ENCODE measurements at regions of chr3 and their contacts with region 1.

Region 1: GRCh38 chr3:168165390-168166269 is 69.9 kb upstream of the GOLIM4 start:
- DNase-seq: peak in 3 of 5 donors; percentile 41 to 66 (median 56)
- ATAC-seq: peak; percentile 48 to 83 (median 72)
- H3K4me3 ChIP-seq: peak overlapping the region in 5 of 12 donors; percentile 11 to 26 (median 23)
- H3K27ac ChIP-seq: peak overlapping the region in 2 of 12 donors; percentile 28 to 46
- H3K4me1 ChIP-seq: peaks cover 0 to 4% (median 0%) of the 10 kb centered on the region in 12 donors
- H3K27me3 ChIP-seq: no peaks in the 10 kb centered on the region
- CTCF ChIP-seq: peak; percentile 59 to 88 (median 80)
- POLR2A ChIP-seq: no peak

Region 2: GRCh38 chr3:167837466-167837865 is 328.2 kb before region 1 on chr3:
- intact Hi-C with region 1: loop called in 1 of 10 experiments (anchors 5 kb)
- DNase-seq: no peak
- ATAC-seq: peak in 1 of 4 donors; percentile 9
- H3K4me3 ChIP-seq: peak overlapping the region in 1 of 12 donors; percentile 2
- H3K27ac ChIP-seq: peak overlapping the region in 2 of 12 donors; percentile 12 to 36
- H3K4me1 ChIP-seq: peaks cover 0 to 23% (median 6%) of the 10 kb centered on the region in 12 donors
- H3K27me3 ChIP-seq: no peaks in the 10 kb centered on the region
- CTCF ChIP-seq: peak in 11 of 12 donors; percentile 17 to 64 (median 50)
- POLR2A ChIP-seq: no peak

Region 3: DNA sequence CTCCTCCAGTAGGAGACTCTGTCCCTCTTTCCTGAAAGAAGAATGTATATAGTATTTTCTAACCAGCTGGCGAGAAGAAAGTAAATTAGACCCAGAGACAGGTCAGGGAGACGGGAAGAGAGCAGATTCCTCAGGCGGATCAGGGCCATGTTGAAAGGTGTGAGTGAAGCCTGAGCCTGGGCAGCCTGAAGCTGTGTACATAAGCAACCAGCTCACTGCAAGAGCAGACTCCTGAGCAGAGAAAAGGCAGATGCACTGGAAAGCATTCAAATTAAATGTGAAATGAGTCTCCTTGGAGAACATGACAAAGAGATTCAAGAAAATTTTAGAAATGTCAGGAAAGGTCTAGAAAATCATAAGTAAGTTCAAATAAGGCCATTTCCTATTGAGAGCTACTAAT is 235.7 kb before region 1 on chr3:
- intact Hi-C with region 1: loop called in 4 of 10 experiments (anchors 10 kb)
- DNase-seq: peak in 1 of 5 donors; percentile 24
- ATAC-seq: peak in 3 of 4 donors; percentile 60 to 75 (median 63)
- H3K4me3 ChIP-seq: no peak overlapping the region
- H3K27ac ChIP-seq: no peak overlapping the region
- H3K4me1 ChIP-seq: peaks cover 0 to 10% (median 0%) of the 10 kb centered on the region in 12 donors
- H3K27me3 ChIP-seq: no peaks in the 10 kb centered on the region
- CTCF ChIP-seq: no peak
- POLR2A ChIP-seq: no peak

Region 4: DNA sequence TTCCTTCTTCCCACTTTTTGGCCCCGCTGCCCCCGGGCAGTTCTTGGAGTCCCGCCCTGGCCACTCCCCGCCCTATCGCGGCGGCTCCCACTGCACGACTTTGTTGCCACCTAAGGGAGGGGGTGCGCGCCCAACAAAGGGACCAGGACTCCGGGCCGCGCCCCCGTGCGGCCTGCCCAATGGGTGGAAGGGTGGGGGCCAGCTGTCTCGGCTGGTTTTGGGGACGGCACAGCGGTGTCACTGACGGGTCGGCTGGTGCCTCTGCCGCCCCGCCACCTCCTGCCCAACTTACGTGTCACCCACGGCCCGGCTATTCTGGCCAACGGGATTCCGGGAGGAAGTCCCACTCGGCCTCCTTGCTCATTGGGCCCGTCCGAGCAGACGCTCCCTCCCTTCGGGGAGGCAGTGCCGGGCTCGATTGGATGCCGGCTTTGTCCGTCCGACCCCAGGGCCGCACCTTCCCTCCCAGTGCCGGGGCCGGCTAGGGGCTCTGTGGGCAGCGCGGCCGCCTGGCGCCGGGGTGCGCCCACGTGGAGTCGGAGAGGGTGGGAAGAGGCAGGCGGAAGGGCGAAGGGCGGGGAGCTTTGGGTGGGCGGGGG is 69.9 kb before region 1 on chr3 and contains the start of gene GOLIM4:
- intact Hi-C with region 1: loop called in 6 of 10 experiments (anchors 2 to 10 kb)
- DNase-seq: peak; percentile 97 to 99 (median 97)
- ATAC-seq: peak; percentile 95 to 97 (median 96)
- H3K4me3 ChIP-seq: peak within 1 kb of the TSS; percentile 50 to 93 (median 80)
- H3K27ac ChIP-seq: peak within 1 kb of the TSS; percentile 92 to 99 (median 97)
- H3K4me1 ChIP-seq: peaks cover 0 to 45% (median 33%) of the 10 kb centered on the region in 12 donors
- H3K27me3 ChIP-seq: no peaks in the 10 kb centered on the region
- CTCF ChIP-seq: peak in 6 of 12 donors; percentile 8 to 44 (median 24)
- POLR2A ChIP-seq: peak; percentile 70 to 93
- total RNA-seq, gene GOLIM4: 61.7 to 106 (median 66.3) TPM

Region 5: DNA sequence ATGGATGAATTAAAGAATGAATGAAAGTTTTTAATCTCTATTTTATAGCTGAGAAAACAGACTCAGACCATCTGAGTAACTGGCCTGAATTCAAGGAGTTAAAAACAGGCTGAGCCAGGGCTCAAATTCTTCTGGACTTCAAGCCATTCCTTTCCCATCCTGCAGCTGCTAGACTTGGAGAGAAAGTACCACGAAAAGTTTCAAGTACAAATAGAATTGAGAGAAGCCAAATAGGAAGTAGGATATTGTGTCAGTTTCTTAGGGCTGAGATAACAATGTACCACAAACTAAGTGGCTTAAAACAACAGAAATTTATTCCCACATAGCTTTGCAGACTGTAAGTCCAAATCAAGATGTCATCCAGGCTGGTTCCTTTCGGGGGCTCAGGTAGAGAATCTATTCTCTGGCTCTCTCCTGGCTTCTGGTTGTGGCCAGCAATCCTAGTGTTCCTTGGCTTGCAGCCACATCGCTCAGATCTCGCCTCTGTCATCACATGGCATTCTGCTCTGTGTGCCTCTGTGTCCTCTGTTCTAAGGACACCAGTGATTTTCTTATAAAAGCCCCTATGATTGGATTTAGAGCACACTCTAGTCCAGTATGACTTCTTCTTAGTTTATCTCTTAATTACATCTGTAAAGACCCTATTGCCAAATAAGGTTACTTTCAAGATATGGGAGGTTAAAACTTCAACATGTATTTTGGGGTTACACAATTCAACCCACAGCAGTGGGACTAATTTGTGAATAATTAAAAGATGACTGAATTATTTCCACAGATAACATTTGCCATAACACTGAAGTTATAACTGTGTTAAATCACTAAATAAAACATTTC is 44.2 kb before region 1 on chr3:
- intact Hi-C with region 1: loop called in 2 of 10 experiments (anchors 5 kb)
- DNase-seq: peak in 4 of 5 donors; percentile 13 to 41 (median 33)
- ATAC-seq: peak; percentile 35 to 77 (median 72)
- H3K4me3 ChIP-seq: no peak overlapping the region
- H3K27ac ChIP-seq: peak overlapping the region in 8 of 12 donors; percentile 6 to 80 (median 28)
- H3K4me1 ChIP-seq: peaks cover 0 to 52% (median 8%) of the 10 kb centered on the region in 12 donors
- H3K27me3 ChIP-seq: no peaks in the 10 kb centered on the region
- CTCF ChIP-seq: no peak
- POLR2A ChIP-seq: no peak

Measured in heart left ventricle (tissue), 16 donors.